ENCODE measurements at regions of chr6 and their contacts with region 1.

Region 1: DNA sequence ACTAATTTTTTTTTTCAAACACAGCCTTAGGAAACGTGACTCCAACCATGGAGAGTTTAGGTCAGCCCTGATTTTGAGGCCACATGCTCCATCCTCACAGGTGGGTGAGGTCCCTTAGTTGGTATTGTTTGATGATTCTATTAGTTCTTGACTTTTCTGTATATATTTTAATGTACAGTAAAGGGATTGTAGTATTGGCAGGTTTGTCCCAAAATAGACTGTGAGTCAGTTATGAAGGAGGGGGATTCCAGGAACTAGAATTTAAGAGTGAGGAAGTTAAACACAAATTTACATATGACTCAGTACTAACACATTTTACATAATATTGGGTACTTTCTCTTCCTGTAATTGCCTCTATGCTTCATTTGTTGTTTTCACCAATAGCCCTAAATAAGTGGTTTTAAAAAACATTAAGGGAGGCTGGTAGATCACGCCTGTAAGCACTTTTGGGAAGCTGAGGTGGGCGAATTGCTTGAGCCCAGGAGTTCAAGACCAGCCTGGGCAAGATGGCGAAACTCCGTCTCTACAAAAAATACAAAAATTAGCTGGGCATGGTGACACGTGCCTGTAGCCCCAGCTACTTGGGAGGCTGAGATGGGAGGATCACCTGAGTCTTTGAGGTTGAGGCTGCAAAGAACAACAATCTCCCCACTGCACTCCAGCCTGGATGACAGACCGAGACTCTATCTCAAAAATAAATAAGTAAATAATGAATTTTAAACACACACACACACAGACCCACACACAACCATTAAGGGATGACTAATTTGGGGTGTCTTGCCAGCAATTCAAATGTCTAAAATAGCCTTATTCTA is 81.8 kb downstream of the SGK1 start:
- DNase-seq: no peak
- ATAC-seq: peak; percentile 78
- H3K4me3 Mint-ChIP-seq: peak overlapping the region; percentile 59
- H3K27ac Mint-ChIP-seq: peak overlapping the region; percentile 97
- H3K4me1 Mint-ChIP-seq: peaks cover 57% of the 10 kb centered on the region
- H3K27me3 Mint-ChIP-seq: no peaks in the 10 kb centered on the region
- CTCF ChIP-seq: no peak

Region 2: DNA sequence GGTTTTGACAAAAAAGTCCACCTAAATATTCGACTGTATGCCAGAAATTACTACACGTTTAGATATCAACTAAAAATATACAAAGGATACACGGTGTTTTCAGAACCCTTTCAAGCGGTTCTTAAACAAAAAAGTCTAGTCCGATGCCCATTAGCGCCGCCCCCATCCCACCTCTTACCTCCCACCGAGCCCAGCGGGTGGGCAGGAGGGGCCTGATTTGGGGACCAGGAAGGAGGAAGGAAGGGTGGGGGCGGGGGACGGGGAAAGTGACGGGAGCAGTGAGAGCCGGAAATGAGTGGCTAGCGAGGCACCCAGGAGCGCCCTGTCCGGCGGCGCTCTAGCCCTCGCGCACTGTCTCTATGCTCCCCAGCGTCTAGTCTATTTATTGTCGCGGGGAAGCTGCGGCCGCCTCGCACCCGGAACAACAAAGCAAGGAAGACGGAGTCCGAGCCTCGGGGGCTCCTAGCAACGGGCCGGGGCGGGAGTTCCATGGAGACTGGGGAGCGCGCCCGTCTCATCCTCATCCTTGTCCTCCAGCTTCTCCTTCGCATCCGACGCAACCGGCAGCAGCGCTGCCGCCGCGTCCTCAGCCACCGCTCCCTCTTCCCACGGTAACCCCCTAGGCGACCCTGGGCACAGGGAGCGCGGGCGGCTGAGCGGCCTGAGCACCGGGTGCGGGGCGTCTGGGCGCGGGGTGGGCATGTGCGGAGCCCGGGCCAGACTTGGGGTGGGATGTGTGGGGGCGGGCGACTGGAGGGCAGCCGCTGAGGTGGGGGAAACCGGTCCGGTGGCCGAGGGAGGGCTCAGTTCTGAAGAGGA is 283.1 kb before region 1 on chr6 and contains the start of gene TBPL1:
- CTCF ChIA-PET with region 1: no interaction called
- POLR2A ChIA-PET with region 1: no interaction called
- intact Hi-C with region 1: loop called (anchors 2 kb)
- DNase-seq: peak; percentile 83
- ATAC-seq: peak; percentile 84
- H3K4me3 Mint-ChIP-seq: peak within 1 kb of the TSS; percentile 95
- H3K27ac Mint-ChIP-seq: peak within 1 kb of the TSS; percentile 98
- H3K4me1 Mint-ChIP-seq: peaks cover 53% of the 10 kb centered on the region
- H3K27me3 Mint-ChIP-seq: no peaks in the 10 kb centered on the region
- CTCF ChIP-seq: no peak
- total RNA-seq, gene TBPL1: 33.0 and 35.7 TPM in 2 replicates

Region 3: DNA sequence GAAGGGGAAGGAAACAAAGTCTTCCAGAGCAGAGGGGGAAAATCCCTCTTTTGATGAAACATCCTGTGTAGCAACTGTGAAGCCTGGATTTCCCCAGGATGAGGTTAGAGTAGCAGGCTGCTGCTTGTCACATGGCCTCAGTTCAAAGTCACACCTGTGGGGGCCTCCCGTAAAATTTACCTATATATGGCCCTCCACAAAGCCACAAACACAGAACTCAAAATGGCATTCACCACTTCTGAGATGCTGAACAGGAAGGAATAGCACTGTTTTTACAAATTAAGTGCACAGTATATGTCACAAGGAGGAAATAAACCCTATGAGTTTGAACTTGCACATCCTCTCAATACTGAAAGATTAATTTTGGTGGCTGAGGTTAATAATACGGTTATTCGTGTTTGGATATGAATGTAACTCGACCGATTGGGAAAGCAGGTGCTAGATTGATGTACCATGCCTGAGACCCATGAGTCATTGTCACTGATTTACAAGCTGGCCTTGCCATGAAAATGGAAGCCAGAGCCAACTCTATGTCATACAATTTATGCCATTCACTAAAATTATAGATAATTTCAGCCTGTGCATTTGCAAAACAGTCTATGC is 11.2 kb after region 1 on chr6:
- CTCF ChIA-PET with region 1: no interaction called
- POLR2A ChIA-PET with region 1: interaction called, 4 read pairs
- intact Hi-C with region 1: loop called (anchors 1 kb)
- DNase-seq: peak; percentile 44
- ATAC-seq: peak; percentile 82
- H3K4me3 Mint-ChIP-seq: peak overlapping the region; percentile 47
- H3K27ac Mint-ChIP-seq: peak overlapping the region; percentile 97
- H3K4me1 Mint-ChIP-seq: peaks cover 59% of the 10 kb centered on the region
- H3K27me3 Mint-ChIP-seq: no peaks in the 10 kb centered on the region
- CTCF ChIP-seq: no peak

Region 4: DNA sequence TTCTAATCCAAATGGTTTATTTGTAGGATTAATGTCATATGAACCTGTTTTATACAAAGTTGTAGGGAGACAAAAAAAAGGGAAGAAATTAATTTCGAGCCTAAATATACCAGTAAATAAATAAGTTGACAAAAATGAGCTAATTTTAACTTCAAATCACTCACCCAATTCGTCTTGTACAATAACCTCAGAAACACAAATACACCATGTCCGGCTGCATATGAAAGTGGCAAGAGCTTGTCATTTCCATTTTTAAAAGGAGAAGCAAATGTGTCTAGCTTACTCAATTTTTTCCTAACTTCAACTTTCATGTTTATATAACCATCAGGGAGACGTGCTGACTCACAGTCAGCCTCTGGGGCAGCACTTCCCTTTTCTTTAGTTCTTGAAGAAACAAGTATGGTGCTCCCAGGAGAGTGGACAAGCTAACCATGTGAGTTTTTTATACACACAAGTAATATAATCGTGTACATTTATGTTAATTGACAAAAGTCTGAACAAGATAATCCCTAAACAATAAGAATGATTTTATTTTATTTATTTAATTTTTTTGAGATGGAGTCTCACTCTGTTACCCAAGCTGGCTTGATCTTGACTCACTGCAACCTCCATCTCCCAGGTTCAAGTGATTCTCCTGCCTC is 137.3 kb after region 1 on chr6:
- CTCF ChIA-PET with region 1: no interaction called
- POLR2A ChIA-PET with region 1: no interaction called
- intact Hi-C with region 1: loop called (anchors 1 kb)
- DNase-seq: no peak
- ATAC-seq: peak; percentile 97
- H3K4me3 Mint-ChIP-seq: peak overlapping the region; percentile 53
- H3K27ac Mint-ChIP-seq: peak overlapping the region; percentile 71
- H3K4me1 Mint-ChIP-seq: peaks cover 28% of the 10 kb centered on the region
- H3K27me3 Mint-ChIP-seq: no peaks in the 10 kb centered on the region
- CTCF ChIP-seq: no peak

Region 5: DNA sequence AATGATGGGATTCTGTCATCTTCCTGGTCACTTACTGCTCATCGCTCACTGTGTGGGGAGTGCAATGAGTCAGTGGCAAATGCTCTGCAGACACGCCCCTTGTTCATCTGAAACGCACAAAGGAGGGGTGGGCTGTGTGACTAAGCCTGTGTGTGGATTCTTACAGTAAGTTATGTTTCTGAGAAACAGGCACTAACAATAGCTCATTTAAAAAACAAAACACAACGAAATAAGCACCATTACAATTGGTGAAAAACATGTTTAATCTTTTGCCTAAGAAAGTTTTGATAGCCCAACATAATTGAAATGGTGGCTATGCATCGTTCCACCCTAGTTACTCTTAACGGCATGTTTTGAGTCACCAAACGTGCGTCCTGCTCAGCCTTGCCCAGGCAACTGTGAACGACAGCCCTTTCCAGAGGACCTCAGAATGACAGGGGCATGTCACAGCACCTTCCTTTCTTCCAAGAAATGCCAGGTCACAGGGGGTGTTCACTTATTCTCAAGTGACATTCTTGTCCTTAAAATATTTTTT is 200.2 kb after region 1 on chr6:
- CTCF ChIA-PET with region 1: no interaction called
- POLR2A ChIA-PET with region 1: no interaction called
- intact Hi-C with region 1: loop called (anchors 1 kb)
- DNase-seq: no peak
- ATAC-seq: peak; percentile 90
- H3K4me3 Mint-ChIP-seq: peak overlapping the region; percentile 70
- H3K27ac Mint-ChIP-seq: peak overlapping the region; percentile 79
- H3K4me1 Mint-ChIP-seq: peaks cover 23% of the 10 kb centered on the region
- H3K27me3 Mint-ChIP-seq: no peaks in the 10 kb centered on the region
- CTCF ChIP-seq: no peak